RWPE1 (cell line): ENCODE measurements at regions of chr2 and their contacts with region 1.

Region 1: GRCh38 chr2:166539340-166540162 is 45.5 kb upstream of the SCN7A start:
- DNase-seq: peak; percentile 55
- H3K27ac ChIP-seq: no peak overlapping the region
- CTCF ChIP-seq: peak; percentile 81

Region 2: GRCh38 chr2:166025313-166025712 is 514.2 kb before region 1 on chr2:
- CTCF ChIA-PET with region 1: interaction called, 10 read pairs
- POLR2A ChIA-PET with region 1: no interaction called
- DNase-seq: no peak
- H3K27ac ChIP-seq: no peak overlapping the region
- CTCF ChIP-seq: no peak